Motor neuron (in vitro differentiated cells): ENCODE measurements at regions of chr14 and their contacts with region 1.

Region 1: GRCh38 chr14:96100161-96101029 is 61.2 kb downstream of the C14orf132 start:
- ATAC-seq: peak; percentile 2 to 72 (median 37)
- H3K4me3 ChIP-seq: no peak overlapping the region
- H3K27ac ChIP-seq: no peak overlapping the region
- H3K4me1 ChIP-seq: peaks cover 8 to 19% of the 10 kb centered on the region in 2 donors

Region 2: GRCh38 chr14:96001866-96002497 is 98.4 kb before region 1 on chr14:
- in situ Hi-C with region 1: loop called in 4 of 9 experiments (anchors 5 to 10 kb)
- ATAC-seq: peak; percentile 43 to 97 (median 88)
- H3K4me3 ChIP-seq: no peak overlapping the region
- H3K27ac ChIP-seq: no peak overlapping the region
- H3K4me1 ChIP-seq: peaks cover 3 to 9% of the 10 kb centered on the region in 2 donors

Region 3: GRCh38 chr14:96016501-96017160 is 83.8 kb before region 1 on chr14:
- in situ Hi-C with region 1: loop called in 1 of 9 experiments (anchors 5 kb)
- ATAC-seq: peak; percentile 46 to 97 (median 79)
- H3K4me3 ChIP-seq: no peak overlapping the region
- H3K27ac ChIP-seq: no peak overlapping the region
- H3K4me1 ChIP-seq: peaks cover 15 to 35% of the 10 kb centered on the region in 2 donors

Region 4: DNA sequence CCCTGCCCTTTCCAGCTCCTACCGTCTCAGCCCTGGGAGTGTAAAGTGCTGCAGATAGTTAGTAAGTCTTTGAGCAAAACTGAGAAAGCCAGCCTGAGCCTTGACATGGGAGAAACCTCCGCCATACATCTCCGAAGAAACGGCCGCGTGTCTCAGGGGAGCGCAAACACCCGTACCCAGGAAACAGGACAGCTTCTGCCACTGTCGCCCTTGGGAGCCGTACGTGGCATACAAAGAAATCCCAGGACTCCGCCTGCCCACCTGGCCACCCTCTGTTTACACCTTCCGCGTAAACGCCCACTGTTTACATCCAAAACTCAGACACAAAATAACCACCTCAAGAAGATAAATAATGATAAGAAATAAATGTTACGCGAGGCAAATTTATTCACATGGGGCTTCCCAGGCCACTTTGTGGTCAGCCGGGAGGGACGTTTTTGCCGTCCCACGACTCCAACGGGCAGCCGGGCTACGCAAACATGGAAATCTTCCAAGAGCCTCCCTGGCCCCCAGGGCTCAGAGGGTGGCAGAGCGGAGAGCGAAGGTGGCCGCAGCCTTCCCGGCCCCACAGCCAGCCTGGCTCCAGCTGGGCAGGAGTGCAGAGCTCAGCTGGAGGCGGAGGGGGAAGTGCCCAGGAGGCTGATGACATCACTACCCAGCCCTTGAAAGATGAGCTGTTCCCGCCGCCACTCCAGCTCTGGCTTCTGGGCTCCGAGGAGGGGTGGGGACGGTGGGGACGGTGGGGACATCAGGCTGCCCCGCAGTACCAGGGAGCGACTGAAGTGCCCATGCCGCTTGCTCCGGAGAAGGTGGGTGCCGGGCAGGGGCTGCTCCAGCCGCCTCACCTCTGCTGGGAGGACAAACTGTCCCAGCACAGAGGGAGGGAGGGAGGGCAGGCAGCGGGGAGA is 104.0 kb after region 1 on chr14 and contains the start of gene BDKRB2:
- in situ Hi-C with region 1: loop called in 1 of 9 experiments (anchors 25 kb)
- ATAC-seq: peak; percentile 79 to 100 (median 99)
- H3K4me3 ChIP-seq: peak within 1 kb of the TSS; percentile 7 to 26 (median 16)
- H3K27ac ChIP-seq: no peak within 1 kb of the TSS
- H3K4me1 ChIP-seq: peaks cover 0 to 7% of the 10 kb centered on the region in 2 donors
- total RNA-seq, gene BDKRB2: 0.11 to 321 (median 0.90) TPM

Region 5: GRCh38 chr14:96268431-96269358 is 168.3 kb after region 1 on chr14:
- in situ Hi-C with region 1: loop called in 7 of 9 experiments (anchors 10 to 25 kb)
- ATAC-seq: peak; percentile 59 to 92 (median 76)
- H3K4me3 ChIP-seq: no peak overlapping the region
- H3K27ac ChIP-seq: no peak overlapping the region
- H3K4me1 ChIP-seq: no peaks in the 10 kb centered on the region

Region 6: GRCh38 chr14:96275177-96276112 is 175.1 kb after region 1 on chr14:
- in situ Hi-C with region 1: loop called in 7 of 9 experiments (anchors 10 to 25 kb)
- ATAC-seq: peak; percentile 58 to 93 (median 70)
- H3K4me3 ChIP-seq: no peak overlapping the region
- H3K27ac ChIP-seq: no peak overlapping the region
- H3K4me1 ChIP-seq: peaks cover 10 to 13% of the 10 kb centered on the region in 2 donors